Posterior vena cava (tissue), 2 donors: ENCODE measurements at regions of chr22 and their contacts with region 1.

Region 1: DNA sequence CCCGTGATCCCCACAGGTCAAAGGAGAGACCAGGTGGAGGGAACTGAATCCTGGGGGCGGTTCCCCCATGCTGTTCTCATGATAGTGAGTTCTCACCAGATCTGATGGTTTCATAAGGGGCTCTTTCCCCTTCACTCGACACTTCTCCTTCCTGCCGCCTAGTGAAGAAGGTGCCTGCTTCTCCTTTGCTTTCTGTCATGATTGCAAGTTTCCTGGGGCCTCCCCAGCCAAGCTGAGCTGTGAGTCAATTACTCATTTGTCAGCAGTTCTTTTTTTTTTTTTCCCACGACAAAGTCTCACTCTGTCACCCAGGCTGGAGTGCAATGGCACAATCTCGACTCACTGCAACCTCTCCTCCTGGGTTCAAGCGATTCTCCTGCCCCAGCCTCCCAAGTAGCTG is 1530.4 kb downstream of the BRD1 start:
- DNase-seq: no peak

Region 2: GRCh38 chr22:48546653-48547424 is 249.5 kb after region 1 on chr22:
- intact Hi-C with region 1: loop called in 1 of 2 experiments (anchors 5 kb)
- DNase-seq: no peak